ENCODE measurements at regions of chr12 and their contacts with region 1.

Region 1: GRCh38 chr12:64696080-64696741 is 63.0 kb downstream of the GNS start:
- DNase-seq: peak; percentile 62
- H3K4me3 ChIP-seq: no peak overlapping the region
- H3K27ac ChIP-seq: no peak overlapping the region
- H3K4me1 ChIP-seq: no peaks in the 10 kb centered on the region
- H3K27me3 ChIP-seq: no peaks in the 10 kb centered on the region
- CTCF ChIP-seq: peak; percentile 6 to 16
- POLR2A ChIP-seq: no peak

Region 2: GRCh38 chr12:64273527-64274403 is 422.4 kb before region 1 on chr12:
- CTCF ChIA-PET with region 1: no interaction called
- POLR2A ChIA-PET with region 1: no interaction called
- dilution Hi-C with region 1: no loop called
- intact Hi-C with region 1: loop called (anchors 5 kb)
- DNase-seq: peak; percentile 9
- H3K4me3 ChIP-seq: no peak overlapping the region
- H3K27ac ChIP-seq: no peak overlapping the region
- H3K4me1 ChIP-seq: no peaks in the 10 kb centered on the region
- H3K27me3 ChIP-seq: peaks cover 0 to 3% of the 10 kb centered on the region in 2 experiments
- CTCF ChIP-seq: peak; percentile 26 to 36
- POLR2A ChIP-seq: no peak

Region 3: GRCh38 chr12:64551698-64552097 is 144.5 kb before region 1 on chr12:
- CTCF ChIA-PET with region 1: interaction called, 217 read pairs
- POLR2A ChIA-PET with region 1: interaction called, 3 read pairs
- dilution Hi-C with region 1: no loop called
- intact Hi-C with region 1: loop called (anchors 1 kb)
- DNase-seq: no peak
- H3K4me3 ChIP-seq: no peak overlapping the region
- H3K27ac ChIP-seq: no peak overlapping the region
- H3K4me1 ChIP-seq: no peaks in the 10 kb centered on the region
- H3K27me3 ChIP-seq: peaks cover 0 to 2% of the 10 kb centered on the region in 2 experiments
- CTCF ChIP-seq: no peak
- POLR2A ChIP-seq: no peak

Region 4: GRCh38 chr12:64583771-64584421 is 112.3 kb before region 1 on chr12:
- CTCF ChIA-PET with region 1: interaction called, 17 read pairs
- POLR2A ChIA-PET with region 1: interaction called, 3 read pairs
- dilution Hi-C with region 1: no loop called
- intact Hi-C with region 1: no loop called
- DNase-seq: peak; percentile 90
- H3K4me3 ChIP-seq: peak overlapping the region in 1 of 3 experiments; percentile 24
- H3K27ac ChIP-seq: peak overlapping the region; percentile 42
- H3K4me1 ChIP-seq: peaks cover 17% of the 10 kb centered on the region
- H3K27me3 ChIP-seq: peaks cover 0 to 2% of the 10 kb centered on the region in 2 experiments
- CTCF ChIP-seq: no peak
- POLR2A ChIP-seq: no peak

Region 5: GRCh38 chr12:64618953-64619590 is 77.1 kb before region 1 on chr12:
- CTCF ChIA-PET with region 1: interaction called, 16 read pairs
- POLR2A ChIA-PET with region 1: no interaction called
- dilution Hi-C with region 1: no loop called
- intact Hi-C with region 1: loop called (anchors 2 kb)
- DNase-seq: peak; percentile 53
- H3K4me3 ChIP-seq: no peak overlapping the region
- H3K27ac ChIP-seq: peak overlapping the region; percentile 97
- H3K4me1 ChIP-seq: peaks cover 70% of the 10 kb centered on the region
- H3K27me3 ChIP-seq: no peaks in the 10 kb centered on the region
- CTCF ChIP-seq: no peak
- POLR2A ChIP-seq: no peak

Region 6: GRCh38 chr12:64706306-64706705 is 10.1 kb after region 1 on chr12:
- CTCF ChIA-PET with region 1: interaction called, 21 read pairs
- POLR2A ChIA-PET with region 1: no interaction called
- dilution Hi-C with region 1: no loop called
- intact Hi-C with region 1: no loop called
- DNase-seq: peak; percentile 40
- H3K4me3 ChIP-seq: no peak overlapping the region
- H3K27ac ChIP-seq: no peak overlapping the region
- H3K4me1 ChIP-seq: peaks cover 8% of the 10 kb centered on the region
- H3K27me3 ChIP-seq: no peaks in the 10 kb centered on the region
- CTCF ChIP-seq: no peak
- POLR2A ChIP-seq: no peak

Region 7: GRCh38 chr12:64760808-64761573 is 64.8 kb after region 1 on chr12:
- CTCF ChIA-PET with region 1: no interaction called
- POLR2A ChIA-PET with region 1: no interaction called
- dilution Hi-C with region 1: no loop called
- intact Hi-C with region 1: no loop called
- DNase-seq: no peak
- H3K4me3 ChIP-seq: no peak overlapping the region
- H3K27ac ChIP-seq: no peak overlapping the region
- H3K4me1 ChIP-seq: peaks cover 14% of the 10 kb centered on the region
- H3K27me3 ChIP-seq: no peaks in the 10 kb centered on the region
- CTCF ChIP-seq: no peak
- POLR2A ChIP-seq: no peak

Region 8: GRCh38 chr12:65585648-65586602 is 889.7 kb after region 1 on chr12:
- CTCF ChIA-PET with region 1: no interaction called
- POLR2A ChIA-PET with region 1: no interaction called
- dilution Hi-C with region 1: no loop called
- intact Hi-C with region 1: no loop called
- DNase-seq: no peak
- H3K4me3 ChIP-seq: no peak overlapping the region
- H3K27ac ChIP-seq: no peak overlapping the region
- H3K4me1 ChIP-seq: no peaks in the 10 kb centered on the region
- H3K27me3 ChIP-seq: no peaks in the 10 kb centered on the region
- CTCF ChIP-seq: no peak
- POLR2A ChIP-seq: no peak